Activated CD4-positive, alpha-beta T cell treated with anti-CD3 and anti-CD28 coated beads, Interleukin-2, amount 10 ng/mL, durations not matched to agents 24 days and 14 days (primary cell): ENCODE measurements at regions of chr6 and their contacts with region 1.

Region 1: DNA sequence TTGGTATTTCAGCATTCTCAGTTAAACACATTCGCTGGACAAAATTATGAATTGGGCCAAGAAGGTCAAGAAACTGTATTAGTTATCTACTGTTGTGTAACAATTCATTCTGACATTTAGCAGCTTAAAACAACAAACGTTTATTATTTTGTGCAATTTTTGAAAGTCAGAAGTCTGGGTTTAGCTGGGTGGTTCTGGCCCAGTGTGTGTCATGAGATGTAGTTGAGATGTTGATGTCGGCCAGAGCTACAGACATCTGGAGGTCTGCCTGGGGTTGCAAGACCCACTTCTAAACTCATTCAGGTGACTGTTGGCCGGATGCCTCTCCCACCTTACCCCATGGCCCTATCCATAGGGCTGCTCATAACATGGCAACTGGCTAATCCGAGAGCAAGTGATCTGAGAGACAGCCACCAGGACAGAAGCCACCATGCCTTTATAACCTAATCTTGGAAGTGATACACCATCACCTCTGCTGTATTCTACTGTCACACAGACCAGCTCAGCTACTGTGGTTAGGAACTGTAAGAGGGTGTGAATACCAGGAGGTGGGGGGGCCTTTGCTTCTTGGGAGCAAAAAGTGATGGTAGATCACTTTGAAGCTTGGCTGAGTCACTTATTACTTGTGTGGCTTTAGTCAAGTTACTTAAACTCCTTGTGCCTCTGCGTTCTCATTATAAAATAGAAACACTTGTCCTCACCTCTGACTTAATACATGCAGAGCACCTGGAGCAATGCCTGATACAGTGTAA is 217.0 kb upstream of the MYLIP start:
- DNase-seq: peak; percentile 65
- H3K4me3 Mint-ChIP-seq: no peak overlapping the region
- H3K27ac Mint-ChIP-seq: peak overlapping the region; percentile 76
- H3K4me1 Mint-ChIP-seq: peaks cover 22% of the 10 kb centered on the region
- H3K27me3 Mint-ChIP-seq: no peaks in the 10 kb centered on the region

Region 2: DNA sequence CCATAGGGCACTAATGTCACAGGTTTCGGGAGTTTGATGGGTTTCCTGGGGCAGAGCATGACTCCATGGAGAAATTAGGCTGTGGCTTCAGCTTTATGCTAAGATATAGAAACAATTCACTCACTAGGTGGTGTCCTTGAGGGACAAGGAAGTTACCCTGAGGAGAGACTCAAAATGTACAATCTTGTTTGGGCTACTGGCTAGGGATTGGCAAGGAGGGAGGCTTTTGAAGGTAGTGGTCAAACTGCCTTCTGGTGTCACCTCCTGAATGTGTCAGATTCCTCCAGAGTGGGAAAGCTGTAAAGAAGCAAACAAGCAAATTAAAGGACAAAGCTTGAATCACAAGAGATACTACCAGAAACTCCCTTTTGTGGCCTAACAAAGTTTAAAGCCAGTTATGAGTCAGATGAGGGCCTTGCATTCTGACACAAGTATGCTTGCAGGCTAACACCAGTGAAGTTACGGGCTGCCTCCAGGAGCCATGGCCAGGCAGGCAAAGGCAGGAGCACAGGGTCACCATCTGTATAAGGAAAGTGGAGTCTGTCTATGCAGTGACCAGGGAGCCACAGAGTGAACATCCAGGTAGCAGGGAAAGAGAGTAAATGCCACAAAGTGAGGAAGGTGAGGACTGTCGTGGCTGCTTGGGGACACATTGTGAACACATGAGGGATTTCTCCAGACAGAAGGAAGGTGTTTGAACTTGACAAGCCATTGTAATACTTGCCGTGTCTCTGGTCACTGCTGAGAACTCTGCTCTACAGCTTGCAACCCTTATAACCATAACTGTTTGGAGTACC is 141.4 kb before region 1 on chr6:
- intact Hi-C with region 1: loop called (anchors 1 kb)
- DNase-seq: peak; percentile 63
- H3K4me3 Mint-ChIP-seq: peak overlapping the region; percentile 47
- H3K27ac Mint-ChIP-seq: peak overlapping the region; percentile 94
- H3K4me1 Mint-ChIP-seq: peaks cover 27% of the 10 kb centered on the region
- H3K27me3 Mint-ChIP-seq: no peaks in the 10 kb centered on the region

Region 3: GRCh38 chr6:15781890-15782289 is 130.0 kb before region 1 on chr6:
- intact Hi-C with region 1: no loop called
- DNase-seq: no peak
- H3K4me3 Mint-ChIP-seq: no peak overlapping the region
- H3K27ac Mint-ChIP-seq: no peak overlapping the region
- H3K4me1 Mint-ChIP-seq: peaks cover 16% of the 10 kb centered on the region
- H3K27me3 Mint-ChIP-seq: no peaks in the 10 kb centered on the region

Region 4: GRCh38 chr6:15879382-15880261 is 32.3 kb before region 1 on chr6:
- intact Hi-C with region 1: loop called (anchors 1 kb)
- DNase-seq: peak; percentile 73
- H3K4me3 Mint-ChIP-seq: peak overlapping the region; percentile 4
- H3K27ac Mint-ChIP-seq: peak overlapping the region; percentile 89
- H3K4me1 Mint-ChIP-seq: peaks cover 29% of the 10 kb centered on the region
- H3K27me3 Mint-ChIP-seq: no peaks in the 10 kb centered on the region

Region 5: GRCh38 chr6:15962449-15962764 is 50.5 kb after region 1 on chr6:
- intact Hi-C with region 1: loop called (anchors 1 kb)
- DNase-seq: peak; percentile 77
- H3K4me3 Mint-ChIP-seq: peak overlapping the region; percentile 1
- H3K27ac Mint-ChIP-seq: peak overlapping the region; percentile 73
- H3K4me1 Mint-ChIP-seq: peaks cover 20% of the 10 kb centered on the region
- H3K27me3 Mint-ChIP-seq: no peaks in the 10 kb centered on the region

Region 6: GRCh38 chr6:16136621-16137450 is 224.9 kb after region 1 on chr6:
- intact Hi-C with region 1: loop called (anchors 2 kb)
- DNase-seq: peak; percentile 71
- H3K4me3 Mint-ChIP-seq: peak overlapping the region; percentile 71
- H3K27ac Mint-ChIP-seq: peak overlapping the region; percentile 93
- H3K4me1 Mint-ChIP-seq: peaks cover 60% of the 10 kb centered on the region
- H3K27me3 Mint-ChIP-seq: no peaks in the 10 kb centered on the region